PC-9 (cell line): ENCODE measurements at regions of chr1 and their contacts with region 1.

Region 1: DNA sequence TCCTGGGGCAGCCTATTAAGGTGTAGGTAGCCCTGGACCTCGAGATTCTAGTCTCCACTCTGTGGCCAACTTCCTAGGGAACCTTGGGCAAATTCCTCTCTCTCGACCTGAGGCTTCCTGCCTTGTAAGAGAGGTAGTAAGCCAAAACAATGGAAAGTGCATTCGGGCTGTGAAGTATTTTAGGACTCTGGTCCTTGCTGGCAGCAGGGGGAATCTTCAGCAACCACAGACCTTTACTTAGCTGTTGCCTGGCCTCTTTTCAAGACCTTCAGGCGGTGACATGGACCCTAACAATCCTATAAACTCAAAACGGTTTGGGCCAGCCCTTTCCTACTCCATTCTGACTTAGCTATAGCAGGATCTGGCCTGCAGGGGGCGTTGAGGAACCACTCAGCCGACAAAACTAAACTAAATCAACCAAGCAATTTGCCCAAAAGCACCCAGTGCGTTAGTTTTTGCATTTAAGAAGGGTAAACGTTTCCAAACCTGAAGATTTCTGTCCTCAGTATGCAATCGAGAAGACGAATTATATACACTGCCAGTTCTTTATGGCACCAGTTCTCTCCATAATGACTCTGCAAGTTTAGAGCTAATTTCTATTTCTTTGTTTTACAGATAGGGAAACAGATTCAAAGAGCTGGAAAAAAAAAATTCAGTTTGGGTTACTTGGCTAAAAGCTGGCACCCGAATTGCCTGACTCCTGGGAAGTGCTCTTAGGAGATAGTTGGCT is 10.9 kb upstream of the SESN2 start:
- DNase-seq: peak; percentile 50 to 72
- H3K4me3 ChIP-seq: peak overlapping the region; percentile 49; the same call in 1 of the 2 replicates
- H3K27ac ChIP-seq: peak overlapping the region; percentile 100
- H3K4me1 ChIP-seq: peaks cover 31% of the 10 kb centered on the region
- H3K27me3 ChIP-seq: no peaks in the 10 kb centered on the region
- CTCF ChIP-seq: peak; percentile 88

Region 2: GRCh38 chr1:28235755-28236655 is 12.4 kb before region 1 on chr1 and contains the start of gene ATP5IF1:
- CTCF ChIA-PET with region 1: interaction called, 10 read pairs
- POLR2A ChIA-PET with region 1: interaction called, 31 read pairs
- intact Hi-C with region 1: no loop called
- DNase-seq: peak; percentile 93 to 94
- H3K4me3 ChIP-seq: peak within 1 kb of the TSS; percentile 88
- H3K27ac ChIP-seq: no peak within 1 kb of the TSS
- H3K4me1 ChIP-seq: peaks cover 9% of the 10 kb centered on the region; the same call in 1 of the 2 replicates
- H3K27me3 ChIP-seq: no peaks in the 10 kb centered on the region
- CTCF ChIP-seq: no peak
- total RNA-seq, gene ATP5IF1: 125 and 146 TPM in 2 replicates

Region 3: DNA sequence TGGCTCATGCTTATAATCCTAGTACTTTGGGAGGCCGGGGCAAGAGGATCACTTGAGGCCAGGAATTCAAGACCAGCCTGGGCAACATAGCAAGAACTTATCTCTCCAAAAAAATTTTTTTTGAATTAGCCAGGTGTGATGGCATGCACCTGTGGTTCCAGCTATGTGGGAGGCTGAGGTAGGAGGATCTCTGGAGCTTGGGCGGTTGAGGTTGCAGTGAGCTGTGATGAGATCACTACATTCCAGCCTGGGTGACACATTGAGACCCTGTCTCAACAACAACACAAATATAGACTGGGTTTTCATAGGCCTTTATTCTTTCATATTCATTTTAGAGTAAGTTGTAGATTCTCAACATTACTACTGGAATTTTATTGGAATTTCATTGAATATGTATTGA is 93.1 kb after region 1 on chr1:
- CTCF ChIA-PET with region 1: no interaction called
- POLR2A ChIA-PET with region 1: interaction called, 21 read pairs
- intact Hi-C with region 1: no loop called
- DNase-seq: peak in 1 of 2 experiments; percentile 60
- H3K4me3 ChIP-seq: no peak overlapping the region
- H3K27ac ChIP-seq: no peak overlapping the region
- H3K4me1 ChIP-seq: peaks cover 7% of the 10 kb centered on the region; the same call in 1 of the 2 replicates
- H3K27me3 ChIP-seq: no peaks in the 10 kb centered on the region
- CTCF ChIP-seq: no peak

Region 4: DNA sequence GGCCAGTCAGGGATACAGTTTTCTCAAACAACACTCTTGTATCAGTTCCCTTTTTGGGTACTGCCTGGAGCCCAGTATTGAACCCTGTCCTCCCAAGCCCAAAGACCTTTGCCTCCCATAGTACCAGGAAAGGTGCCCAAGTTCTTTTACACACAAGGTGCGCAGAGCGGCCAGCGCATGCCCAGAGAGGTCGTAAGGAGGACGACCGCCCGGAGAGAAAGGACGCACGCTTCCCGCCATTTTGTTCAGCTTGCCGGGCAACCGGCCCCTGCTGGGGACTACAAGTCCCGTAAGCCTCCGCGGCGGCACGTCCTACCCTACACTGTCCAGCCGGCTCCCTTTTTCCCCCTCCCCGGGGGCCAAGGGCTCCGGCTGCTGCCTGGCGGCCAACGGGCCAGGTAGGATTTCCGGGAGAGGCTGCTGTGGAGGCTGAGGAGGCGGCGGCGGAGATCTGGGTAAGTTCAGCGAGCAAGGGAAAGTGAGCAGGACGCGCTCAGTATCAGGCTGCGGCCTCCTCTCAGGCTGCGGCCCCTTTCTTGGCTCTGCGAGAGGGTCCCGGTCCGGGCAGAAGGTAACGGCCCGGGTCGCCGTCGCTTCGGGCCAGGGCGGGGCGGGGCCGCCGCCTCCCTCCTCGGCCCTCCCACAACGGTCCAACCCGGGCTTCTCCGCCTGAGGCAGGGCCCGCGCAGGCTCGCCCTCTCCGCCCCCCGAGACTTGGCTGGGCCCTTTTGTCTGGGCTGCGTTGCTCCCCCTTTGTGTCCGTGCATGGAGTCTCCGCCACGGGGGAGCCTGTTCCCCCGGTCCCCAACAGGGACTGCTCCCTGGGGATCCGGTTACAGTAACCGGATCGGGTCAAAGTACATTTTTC is 121.2 kb after region 1 on chr1 and contains the start of gene PHACTR4:
- CTCF ChIA-PET with region 1: interaction called, 13 read pairs
- POLR2A ChIA-PET with region 1: interaction called, 7 read pairs
- intact Hi-C with region 1: loop called (anchors 1 kb)
- DNase-seq: peak; percentile 77 to 93
- H3K4me3 ChIP-seq: peak within 1 kb of the TSS; percentile 67
- H3K27ac ChIP-seq: peak within 1 kb of the TSS; percentile 52
- H3K4me1 ChIP-seq: peaks cover 23% of the 10 kb centered on the region
- H3K27me3 ChIP-seq: no peaks in the 10 kb centered on the region
- CTCF ChIP-seq: no peak
- total RNA-seq, gene PHACTR4: 33.2 and 45.1 TPM in 2 replicates

Region 5: GRCh38 chr1:28505406-28506187 is 257.1 kb after region 1 on chr1 and contains the start of gene RCC1:
- CTCF ChIA-PET with region 1: no interaction called
- POLR2A ChIA-PET with region 1: interaction called, 43 read pairs
- intact Hi-C with region 1: loop called (anchors 5 kb)
- DNase-seq: peak; percentile 92 to 95
- H3K4me3 ChIP-seq: peak within 1 kb of the TSS; percentile 83
- H3K27ac ChIP-seq: peak within 1 kb of the TSS; percentile 99
- H3K4me1 ChIP-seq: peaks cover 38% of the 10 kb centered on the region
- H3K27me3 ChIP-seq: 0 out of 2 replicates have a peak, but pooled peaks cover 3% of the 10 kb centered on the region
- CTCF ChIP-seq: no peak
- total RNA-seq, gene RCC1: 134 and 156 TPM in 2 replicates

Region 6: GRCh38 chr1:28602536-28603439 is 354.3 kb after region 1 on chr1:
- CTCF ChIA-PET with region 1: interaction called, 3 read pairs
- POLR2A ChIA-PET with region 1: interaction called, 3 read pairs
- intact Hi-C with region 1: loop called (anchors 2 kb)
- DNase-seq: peak; percentile 47 to 50
- H3K4me3 ChIP-seq: no peak overlapping the region
- H3K27ac ChIP-seq: peak overlapping the region; percentile 89
- H3K4me1 ChIP-seq: peaks cover 23% of the 10 kb centered on the region
- H3K27me3 ChIP-seq: no peaks in the 10 kb centered on the region
- CTCF ChIP-seq: peak; percentile 75